Right ventricle myocardium inferior (tissue), 1 donor: ENCODE measurements at regions of chr11 and their contacts with region 1.

Region 1: GRCh38 chr11:37026326-37026725 is 428.3 kb upstream of the RAG2 start:
- DNase-seq: no peak
- ATAC-seq: no peak

Region 2: DNA sequence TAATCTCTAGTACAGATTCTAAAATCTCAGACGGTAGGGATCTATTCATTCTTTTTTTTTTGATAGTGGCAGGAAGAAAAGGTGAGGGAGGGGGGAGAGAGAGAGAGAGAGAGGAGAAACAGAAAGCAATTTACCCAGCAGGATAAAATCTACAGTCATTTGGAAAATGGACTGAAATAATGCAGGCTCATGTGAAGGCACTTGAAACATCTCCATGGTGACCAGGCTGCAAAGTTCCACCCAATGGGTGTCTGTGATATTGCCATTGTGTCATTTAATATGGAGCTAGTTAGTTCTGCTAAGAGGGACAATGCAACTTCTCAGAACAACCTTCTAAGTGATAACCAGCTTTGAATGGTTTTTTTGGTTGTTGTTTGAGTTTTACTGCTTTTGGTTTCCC is 263.1 kb before region 1 on chr11:
- intact Hi-C with region 1: loop called (anchors 5 kb)
- DNase-seq: no peak
- ATAC-seq: no peak

Region 3: GRCh38 chr11:37050311-37050710 is 24.0 kb after region 1 on chr11:
- intact Hi-C with region 1: no loop called
- DNase-seq: no peak
- ATAC-seq: no peak